ENCODE measurements at regions of chr4 and their contacts with region 1.

Region 1: DNA sequence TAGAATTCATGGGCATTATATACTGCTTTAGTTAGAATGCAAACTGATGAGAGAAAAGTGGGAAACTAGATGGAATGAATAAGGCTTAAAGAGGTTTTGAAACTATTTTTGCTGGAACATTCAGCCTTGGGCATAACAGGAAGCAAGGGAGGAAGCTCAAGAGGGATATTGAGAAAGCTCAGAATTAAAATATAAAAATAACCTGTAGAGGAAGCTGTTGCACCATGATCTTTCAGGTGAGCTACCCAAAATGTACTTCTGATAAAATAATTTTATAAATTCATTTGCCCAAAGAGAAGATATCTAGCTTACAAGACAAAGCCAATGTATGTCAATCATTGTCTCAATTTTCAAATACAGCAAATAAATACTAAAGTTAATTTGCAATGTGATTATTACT is 11.3 kb downstream of the GC start:
- DNase-seq: no peak
- H3K4me3 Mint-ChIP-seq: no peak overlapping the region
- H3K27ac Mint-ChIP-seq: no peak overlapping the region
- H3K4me1 Mint-ChIP-seq: peaks cover 8% of the 10 kb centered on the region
- H3K27me3 Mint-ChIP-seq: no peaks in the 10 kb centered on the region
- CTCF ChIP-seq: no peak

Region 2: DNA sequence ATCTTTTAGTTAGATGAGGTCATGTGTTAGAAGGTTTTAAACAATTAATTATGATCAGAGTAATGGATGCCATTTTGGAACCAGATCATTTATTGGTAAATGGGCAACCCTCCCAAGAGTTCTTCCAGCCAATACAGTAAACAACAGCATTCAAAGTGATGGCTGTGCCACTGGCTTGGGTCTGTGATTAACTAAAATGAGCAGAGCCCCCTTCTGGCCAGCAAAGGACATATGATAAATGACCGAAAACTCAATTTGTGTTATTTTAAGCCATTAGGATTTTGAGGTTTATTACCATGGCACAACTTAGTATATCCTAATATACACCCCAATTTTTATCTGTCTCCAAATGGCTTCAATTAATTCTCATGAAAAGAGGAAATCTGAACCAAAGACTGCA is 168.4 kb after region 1 on chr4:
- CTCF ChIA-PET with region 1: no interaction called
- intact Hi-C with region 1: loop called (anchors 10 kb)
- DNase-seq: peak; percentile 6
- H3K4me3 Mint-ChIP-seq: no peak overlapping the region
- H3K27ac Mint-ChIP-seq: no peak overlapping the region
- H3K4me1 Mint-ChIP-seq: no peaks in the 10 kb centered on the region
- H3K27me3 Mint-ChIP-seq: no peaks in the 10 kb centered on the region
- CTCF ChIP-seq: no peak

Region 3: DNA sequence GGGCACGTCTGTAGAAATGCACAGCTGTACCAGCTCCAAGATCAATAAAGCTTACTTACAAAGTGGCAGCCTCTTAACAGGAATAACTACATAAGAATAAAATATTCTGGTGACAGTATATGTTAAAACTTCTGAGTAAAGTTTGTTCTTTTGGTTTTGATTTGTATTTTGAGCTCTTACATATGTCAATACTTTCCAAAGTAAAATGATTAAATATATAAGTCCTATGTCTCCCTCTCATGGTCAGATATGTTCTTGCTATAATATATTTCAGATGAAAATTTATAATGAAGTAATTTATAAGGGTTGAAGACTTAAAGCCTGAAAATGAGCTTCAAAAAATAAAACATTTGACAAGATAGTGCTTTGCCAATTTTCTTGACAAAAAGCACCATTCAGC is 513.6 kb after region 1 on chr4:
- CTCF ChIA-PET with region 1: interaction called, 12 read pairs
- intact Hi-C with region 1: loop called (anchors 2 kb)
- DNase-seq: no peak
- H3K4me3 Mint-ChIP-seq: no peak overlapping the region
- H3K27ac Mint-ChIP-seq: no peak overlapping the region
- H3K4me1 Mint-ChIP-seq: peaks cover 8% of the 10 kb centered on the region
- H3K27me3 Mint-ChIP-seq: no peaks in the 10 kb centered on the region
- CTCF ChIP-seq: no peak

Measured in Calu3 (cell line).